WTC11 (cell line): ENCODE measurements at regions of chr2 and their contacts with region 1.

Region 1: DNA sequence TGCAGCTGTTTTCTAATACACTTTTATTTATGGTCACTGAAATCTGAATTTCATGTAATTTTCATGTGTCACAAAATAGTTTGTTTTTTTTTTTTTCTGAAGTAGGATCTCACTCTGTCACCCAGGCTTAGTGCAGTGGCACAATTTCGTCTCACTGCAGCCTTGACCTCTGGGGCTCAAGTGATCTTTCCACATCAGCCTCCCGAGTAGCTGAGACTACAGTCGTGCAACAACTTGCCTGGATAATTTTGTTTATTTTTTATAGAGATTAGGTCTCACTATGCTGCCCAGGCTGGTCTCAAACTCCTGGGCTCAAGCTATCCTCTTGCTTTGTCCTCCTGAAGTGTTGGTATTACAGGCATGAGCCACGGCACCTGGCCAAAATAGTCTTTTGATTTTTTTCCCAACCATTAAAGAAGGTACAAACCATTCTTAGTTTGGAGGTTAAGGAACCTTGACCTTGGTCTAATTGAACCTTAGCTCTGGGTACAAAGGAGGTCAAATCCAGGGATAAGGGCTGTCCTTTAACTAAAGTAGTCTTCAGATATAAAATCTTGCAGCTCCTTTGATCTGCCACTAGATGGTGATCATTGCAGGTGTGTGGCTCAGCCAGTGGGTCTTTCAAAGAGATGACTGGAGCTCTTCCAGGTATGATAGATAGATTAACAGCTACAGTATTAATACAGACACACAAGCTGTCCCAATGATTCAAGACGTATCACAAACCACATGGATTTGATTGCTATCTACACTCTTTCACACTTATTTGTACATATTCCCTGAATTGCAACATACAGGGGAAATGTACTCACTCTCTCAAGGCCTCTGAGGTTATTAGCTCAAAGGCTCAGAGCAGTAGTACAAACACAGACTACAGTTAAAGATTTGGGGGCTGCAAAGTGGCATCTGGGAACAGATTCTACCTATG is 4.7 kb upstream of the KRCC1 start:
- DNase-seq: peak; percentile 22
- ATAC-seq: peak; percentile 62
- H3K4me3 Mint-ChIP-seq: no peak overlapping the region
- H3K27ac Mint-ChIP-seq: no peak overlapping the region
- H3K4me1 Mint-ChIP-seq: peaks cover 16% of the 10 kb centered on the region
- H3K27me3 Mint-ChIP-seq: no peaks in the 10 kb centered on the region
- CTCF ChIP-seq: 0 out of 2 replicates have a peak, but pooled peaks have one; percentile 23

Region 2: DNA sequence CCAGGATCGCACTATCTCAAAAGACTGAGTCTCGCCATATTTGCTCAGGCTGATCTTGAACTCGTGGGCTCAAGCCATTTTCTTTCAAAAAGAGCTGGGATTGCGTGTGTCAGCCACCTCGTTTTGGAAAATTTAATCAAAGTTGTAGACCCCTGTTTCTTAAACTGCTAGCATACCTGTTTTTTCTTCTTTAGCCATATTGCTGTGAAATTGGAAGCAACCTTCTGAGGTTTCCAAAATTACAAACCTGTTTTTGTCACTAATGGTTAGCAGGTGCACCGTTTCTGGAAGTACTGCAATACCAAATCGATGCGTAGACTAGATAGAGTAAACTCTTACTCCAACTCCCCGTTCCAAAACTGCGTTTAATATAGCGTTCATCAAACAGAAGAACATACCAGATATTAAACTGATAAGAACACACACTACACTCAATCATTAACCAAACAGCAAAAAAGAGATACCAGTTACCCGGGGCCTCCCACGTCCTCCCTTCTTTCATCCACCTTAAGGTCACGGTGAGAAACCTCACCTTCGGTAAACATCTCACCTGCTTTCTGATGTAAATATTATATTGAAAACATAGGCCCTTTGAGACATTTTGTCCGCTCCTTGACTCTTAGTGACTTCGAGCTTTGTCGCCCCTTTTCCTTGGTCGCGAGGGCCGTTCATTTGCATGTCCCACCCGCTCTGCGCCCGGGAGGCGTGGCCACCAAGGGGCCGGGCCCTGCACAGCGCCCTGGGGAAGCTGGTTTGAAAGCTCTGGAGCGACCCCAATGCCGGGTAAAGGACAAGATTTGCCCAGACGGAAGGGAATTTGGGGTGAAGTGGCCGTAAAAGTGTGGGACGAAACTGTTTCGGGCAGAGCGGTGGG is 43.9 kb before region 1 on chr2 and contains the start of gene RNU2-63P:
- CTCF ChIA-PET with region 1: interaction called, 13 read pairs
- POLR2A ChIA-PET with region 1: interaction called, 5 read pairs
- DNase-seq: peak; percentile 73
- ATAC-seq: peak; percentile 84
- H3K4me3 Mint-ChIP-seq: peak within 1 kb of the TSS; percentile 95
- H3K27ac Mint-ChIP-seq: peak within 1 kb of the TSS; percentile 100
- H3K4me1 Mint-ChIP-seq: peaks cover 39% of the 10 kb centered on the region
- H3K27me3 Mint-ChIP-seq: no peaks in the 10 kb centered on the region; the same call in 1 of the 2 replicates
- CTCF ChIP-seq: no peak
- total RNA-seq, gene RNU2-63P: 2.5 to 7.7 TPM (median 5.2 TPM) in 3 replicates

Region 3: GRCh38 chr2:88082781-88083180 is 22.5 kb after region 1 on chr2:
- CTCF ChIA-PET with region 1: interaction called, 36 read pairs
- POLR2A ChIA-PET with region 1: interaction called, 5 read pairs
- DNase-seq: no peak
- ATAC-seq: peak; percentile 77
- H3K4me3 Mint-ChIP-seq: no peak overlapping the region
- H3K27ac Mint-ChIP-seq: peak overlapping the region; percentile 71; the same call in 1 of the 2 replicates
- H3K4me1 Mint-ChIP-seq: peaks cover 21% of the 10 kb centered on the region
- H3K27me3 Mint-ChIP-seq: no peaks in the 10 kb centered on the region; the same call in 1 of the 2 replicates
- CTCF ChIP-seq: no peak

Region 4: DNA sequence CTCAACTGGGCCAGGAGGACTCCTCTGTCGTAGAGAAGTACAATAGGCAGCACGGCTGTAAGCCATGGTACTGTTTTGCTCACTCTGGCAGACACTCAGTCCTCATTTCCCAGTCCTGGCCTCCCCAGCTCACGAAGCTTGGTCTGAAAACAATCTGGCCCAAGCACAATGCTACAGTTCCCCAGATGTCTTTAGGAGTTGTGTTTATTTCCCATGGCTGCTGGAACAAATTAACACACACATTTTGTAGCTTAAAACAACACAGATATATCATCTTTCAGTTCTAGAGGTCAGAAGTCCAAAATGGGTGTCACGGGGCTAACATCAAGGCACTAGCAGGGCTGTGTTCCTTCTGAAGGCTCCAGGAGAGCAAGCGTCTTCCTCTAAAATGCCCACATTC is 54.6 kb after region 1 on chr2:
- CTCF ChIA-PET with region 1: interaction called, 24 read pairs
- POLR2A ChIA-PET with region 1: no interaction called
- DNase-seq: no peak
- ATAC-seq: no peak
- H3K4me3 Mint-ChIP-seq: no peak overlapping the region
- H3K27ac Mint-ChIP-seq: no peak overlapping the region
- H3K4me1 Mint-ChIP-seq: peaks cover 6% of the 10 kb centered on the region; the same call in 1 of the 2 replicates
- H3K27me3 Mint-ChIP-seq: no peaks in the 10 kb centered on the region; the same call in 1 of the 2 replicates
- CTCF ChIP-seq: no peak

Region 5: GRCh38 chr2:88159955-88160415 is 99.7 kb after region 1 on chr2:
- CTCF ChIA-PET with region 1: interaction called, 200 read pairs
- POLR2A ChIA-PET with region 1: interaction called, 4 read pairs
- DNase-seq: peak; percentile 65
- ATAC-seq: peak; percentile 80
- H3K4me3 Mint-ChIP-seq: no peak overlapping the region
- H3K27ac Mint-ChIP-seq: no peak overlapping the region
- H3K4me1 Mint-ChIP-seq: peaks cover 11% of the 10 kb centered on the region
- H3K27me3 Mint-ChIP-seq: no peaks in the 10 kb centered on the region; the same call in 1 of the 2 replicates
- CTCF ChIP-seq: peak; percentile 58

Region 6: DNA sequence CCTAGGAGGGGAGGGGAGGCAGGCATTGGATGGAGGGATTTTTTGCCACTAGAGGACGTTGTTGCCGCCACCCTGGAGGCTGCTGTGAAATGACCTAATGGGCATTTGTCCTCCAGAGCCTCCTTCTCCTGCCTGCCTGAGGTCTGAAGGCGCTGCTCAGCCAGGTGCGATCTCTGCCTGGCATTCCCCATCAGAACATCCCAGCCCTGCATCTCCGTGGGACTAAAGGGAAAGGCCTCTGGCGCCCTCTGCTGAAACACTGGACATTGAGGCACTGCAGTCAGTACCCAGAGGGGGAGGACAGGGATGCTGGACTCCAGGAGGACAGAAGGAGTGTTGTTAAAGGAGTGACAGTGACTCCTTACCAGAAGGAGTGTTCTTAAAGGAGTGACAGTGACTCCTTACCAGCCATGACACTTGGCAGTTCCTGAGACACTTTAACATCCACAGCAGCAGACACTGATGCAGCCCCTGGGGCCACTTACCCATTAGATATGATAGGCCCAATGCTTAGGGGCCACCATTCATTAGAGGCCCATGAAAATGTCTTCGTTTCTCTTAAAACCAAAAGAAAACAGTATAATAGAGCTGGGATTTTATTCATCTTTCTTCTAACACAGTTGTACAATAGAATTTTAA is 126.9 kb after region 1 on chr2:
- CTCF ChIA-PET with region 1: interaction called, 27 read pairs
- POLR2A ChIA-PET with region 1: interaction called, 3 read pairs
- DNase-seq: peak; percentile 89
- ATAC-seq: peak; percentile 78
- H3K4me3 Mint-ChIP-seq: no peak overlapping the region
- H3K27ac Mint-ChIP-seq: no peak overlapping the region
- H3K4me1 Mint-ChIP-seq: peaks cover 19% of the 10 kb centered on the region
- H3K27me3 Mint-ChIP-seq: peaks cover 5% of the 10 kb centered on the region
- CTCF ChIP-seq: peak; percentile 65